ENCODE measurements at regions of chr12 and their contacts with region 1.

Region 1: DNA sequence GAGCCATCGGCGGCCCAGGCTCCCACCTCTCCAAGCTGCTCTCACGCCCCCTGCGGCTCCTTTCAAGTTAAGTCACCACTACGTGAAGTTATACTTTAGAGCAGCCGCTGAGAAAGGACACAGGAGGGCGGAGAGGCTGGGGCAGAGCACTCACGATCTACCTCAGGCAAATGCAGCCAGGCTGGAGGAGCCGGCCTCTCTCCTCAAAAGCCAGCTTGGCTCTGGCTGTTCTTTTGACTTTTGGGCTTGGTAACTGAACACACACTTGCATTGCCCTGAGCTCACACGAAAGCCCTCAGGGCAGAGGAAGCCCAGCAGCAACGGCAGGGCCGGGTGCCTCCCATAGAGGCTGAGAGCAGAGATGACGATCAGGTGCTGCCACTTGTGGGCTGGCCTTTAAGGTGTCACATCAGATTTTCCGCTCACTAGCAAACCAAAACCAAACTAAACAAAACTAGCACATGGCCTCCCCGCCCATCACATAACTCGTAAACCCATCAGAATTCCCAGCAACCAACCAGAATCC is 75.2 kb downstream of the PITPNM2 start:
- DNase-seq: peak; percentile 88
- H3K4me3 Mint-ChIP-seq: peak overlapping the region; percentile 84
- H3K27ac Mint-ChIP-seq: peak overlapping the region; percentile 98
- H3K4me1 Mint-ChIP-seq: peaks cover 52% of the 10 kb centered on the region
- H3K27me3 Mint-ChIP-seq: no peaks in the 10 kb centered on the region

Region 2: DNA sequence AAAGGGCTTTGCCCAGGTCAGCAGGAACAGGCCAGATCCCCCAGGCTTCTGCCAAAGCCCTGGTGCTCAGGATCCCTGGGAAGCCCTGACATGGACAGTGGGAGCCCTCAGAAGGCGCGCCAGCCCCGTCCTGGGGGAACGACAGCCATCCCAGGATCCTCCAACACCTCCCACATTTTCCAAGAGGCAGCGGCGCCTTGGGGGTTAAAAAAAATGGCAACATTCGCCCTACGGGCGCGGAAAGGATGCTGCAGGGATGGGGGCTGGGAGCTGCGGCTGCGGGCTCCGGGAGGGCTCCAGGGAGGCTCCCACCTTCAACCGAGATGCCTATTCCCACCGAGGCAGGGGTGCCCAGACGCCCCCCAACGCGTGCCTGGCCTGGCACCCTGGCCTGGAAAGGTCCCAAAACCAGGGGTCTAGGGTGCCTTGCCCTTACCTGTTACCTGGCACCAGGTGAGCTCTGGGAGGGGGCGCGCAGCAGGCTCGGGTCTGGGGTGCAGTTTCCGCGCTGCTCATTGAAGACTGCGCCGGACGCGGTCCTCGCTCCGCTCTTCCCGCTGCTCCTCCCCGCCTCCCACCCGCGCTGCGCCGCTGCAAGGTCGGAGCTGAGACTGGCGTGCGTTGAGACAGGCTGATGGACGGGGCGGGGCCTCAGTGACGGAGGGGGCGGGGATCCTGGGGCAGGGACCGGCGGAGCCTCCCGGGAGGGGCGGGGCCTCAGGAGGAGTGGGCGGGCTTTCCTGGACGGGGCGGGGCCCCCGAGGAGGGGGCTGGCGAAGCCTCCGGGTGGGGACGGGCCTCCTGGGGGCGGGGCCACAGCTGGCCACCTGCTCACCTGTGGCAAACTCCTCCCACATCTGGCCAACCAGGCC is 109.6 kb before region 1 on chr12 and contains the start of gene ABCB9:
- CTCF ChIA-PET with region 1: no interaction called
- DNase-seq: peak; percentile 97
- H3K4me3 Mint-ChIP-seq: peak within 1 kb of the TSS; percentile 62
- H3K27ac Mint-ChIP-seq: peak within 1 kb of the TSS; percentile 65
- H3K4me1 Mint-ChIP-seq: peaks cover 19% of the 10 kb centered on the region
- H3K27me3 Mint-ChIP-seq: peaks cover 6% of the 10 kb centered on the region

Region 3: GRCh38 chr12:123043536-123044001 is 32.1 kb before region 1 on chr12:
- CTCF ChIA-PET with region 1: interaction called, 78 read pairs
- DNase-seq: peak; percentile 86
- H3K4me3 Mint-ChIP-seq: no peak overlapping the region
- H3K27ac Mint-ChIP-seq: peak overlapping the region; percentile 45
- H3K4me1 Mint-ChIP-seq: peaks cover 30% of the 10 kb centered on the region
- H3K27me3 Mint-ChIP-seq: no peaks in the 10 kb centered on the region

Region 4: GRCh38 chr12:123050331-123050831 is 25.3 kb before region 1 on chr12:
- CTCF ChIA-PET with region 1: interaction called, 78 read pairs
- DNase-seq: no peak
- H3K4me3 Mint-ChIP-seq: no peak overlapping the region
- H3K27ac Mint-ChIP-seq: no peak overlapping the region
- H3K4me1 Mint-ChIP-seq: peaks cover 15% of the 10 kb centered on the region
- H3K27me3 Mint-ChIP-seq: no peaks in the 10 kb centered on the region

Region 5: DNA sequence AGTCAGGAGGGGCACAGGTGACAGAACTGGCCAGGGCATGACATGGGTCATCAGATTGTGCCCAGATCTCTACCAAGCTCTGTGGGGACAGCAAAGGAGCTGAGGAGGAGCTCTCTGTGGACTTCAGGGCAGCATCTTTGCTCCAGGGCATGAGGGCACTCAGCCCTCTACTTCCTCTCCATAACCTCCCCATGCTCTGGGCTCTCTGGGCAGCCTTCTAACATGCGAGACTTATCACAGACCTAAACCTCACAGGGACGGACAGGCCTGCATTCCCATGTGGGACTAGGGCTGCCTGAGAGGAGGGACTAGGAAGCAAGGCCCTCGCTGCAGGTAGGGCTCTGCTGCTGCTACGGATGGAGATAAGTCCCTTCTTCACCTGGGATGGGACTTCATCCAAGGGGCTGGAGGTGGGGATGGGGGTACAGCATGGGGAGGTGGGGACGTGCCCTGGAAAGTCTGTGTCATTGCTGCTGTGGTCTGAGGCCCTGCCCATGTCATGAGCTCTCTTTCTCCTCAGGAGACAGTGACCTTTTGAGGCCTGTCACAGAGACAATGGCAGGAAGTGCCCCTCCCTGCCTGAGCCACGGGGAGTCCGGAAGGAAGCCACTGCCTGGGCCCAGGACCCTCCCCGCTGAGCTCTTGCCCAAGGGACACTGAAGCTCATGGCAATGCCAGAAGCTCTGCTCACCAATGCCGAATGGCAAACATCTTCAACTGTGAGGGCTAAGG is 31.1 kb after region 1 on chr12:
- CTCF ChIA-PET with region 1: interaction called, 14 read pairs
- DNase-seq: peak; percentile 84
- H3K4me3 Mint-ChIP-seq: peak overlapping the region; percentile 54
- H3K27ac Mint-ChIP-seq: peak overlapping the region; percentile 94
- H3K4me1 Mint-ChIP-seq: peaks cover 68% of the 10 kb centered on the region
- H3K27me3 Mint-ChIP-seq: no peaks in the 10 kb centered on the region

Region 6: GRCh38 chr12:123120452-123121166 is 44.9 kb after region 1 on chr12:
- CTCF ChIA-PET with region 1: interaction called, 16 read pairs
- DNase-seq: peak; percentile 68
- H3K4me3 Mint-ChIP-seq: peak overlapping the region; percentile 55
- H3K27ac Mint-ChIP-seq: peak overlapping the region; percentile 100
- H3K4me1 Mint-ChIP-seq: peaks cover 74% of the 10 kb centered on the region
- H3K27me3 Mint-ChIP-seq: no peaks in the 10 kb centered on the region

Region 7: DNA sequence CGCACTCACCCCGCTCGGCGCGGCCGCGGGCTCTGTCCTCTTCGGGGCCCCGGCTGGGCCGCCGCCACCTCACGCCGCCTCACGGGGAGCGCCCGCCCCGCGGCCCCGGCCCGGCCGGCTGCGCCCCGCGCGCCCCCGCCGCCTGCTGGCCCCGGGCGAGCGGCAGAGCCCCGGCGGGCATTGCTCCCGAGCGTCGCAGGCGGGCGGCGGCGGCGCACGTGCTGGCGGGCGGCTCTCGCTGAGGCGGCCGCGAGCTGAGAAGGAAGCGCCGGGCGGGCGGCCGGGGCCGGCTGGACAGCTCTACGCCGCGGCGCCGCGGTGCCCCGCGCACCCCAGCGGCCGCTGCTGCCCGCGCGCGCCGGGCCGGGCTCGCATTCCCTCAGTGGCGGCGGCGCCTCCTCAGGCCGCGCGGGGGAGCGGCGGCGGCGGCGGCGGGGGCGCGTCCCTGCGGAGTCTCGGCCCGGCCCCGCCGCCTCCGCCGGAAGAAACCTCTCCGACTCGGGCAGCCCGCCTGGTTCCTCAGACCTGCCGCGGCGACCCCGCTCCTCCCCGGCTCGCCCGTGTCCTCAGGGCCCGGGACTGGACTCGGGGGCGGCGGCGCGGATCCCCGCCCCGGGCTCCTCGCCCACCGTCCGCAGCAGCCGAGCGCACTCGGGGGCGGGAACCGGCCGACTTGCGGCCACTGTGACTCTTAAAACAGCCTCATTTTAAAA is 75.2 kb after region 1 on chr12 and contains the start of gene PITPNM2:
- CTCF ChIA-PET with region 1: interaction called, 15 read pairs
- DNase-seq: peak; percentile 73
- H3K4me3 Mint-ChIP-seq: peak within 1 kb of the TSS; percentile 84
- H3K27ac Mint-ChIP-seq: peak within 1 kb of the TSS; percentile 58
- H3K4me1 Mint-ChIP-seq: peaks cover 46% of the 10 kb centered on the region
- H3K27me3 Mint-ChIP-seq: peaks cover 15% of the 10 kb centered on the region